GM18951 (cell line): ENCODE measurements at regions of chr3 and their contacts with region 1.

Region 1: DNA sequence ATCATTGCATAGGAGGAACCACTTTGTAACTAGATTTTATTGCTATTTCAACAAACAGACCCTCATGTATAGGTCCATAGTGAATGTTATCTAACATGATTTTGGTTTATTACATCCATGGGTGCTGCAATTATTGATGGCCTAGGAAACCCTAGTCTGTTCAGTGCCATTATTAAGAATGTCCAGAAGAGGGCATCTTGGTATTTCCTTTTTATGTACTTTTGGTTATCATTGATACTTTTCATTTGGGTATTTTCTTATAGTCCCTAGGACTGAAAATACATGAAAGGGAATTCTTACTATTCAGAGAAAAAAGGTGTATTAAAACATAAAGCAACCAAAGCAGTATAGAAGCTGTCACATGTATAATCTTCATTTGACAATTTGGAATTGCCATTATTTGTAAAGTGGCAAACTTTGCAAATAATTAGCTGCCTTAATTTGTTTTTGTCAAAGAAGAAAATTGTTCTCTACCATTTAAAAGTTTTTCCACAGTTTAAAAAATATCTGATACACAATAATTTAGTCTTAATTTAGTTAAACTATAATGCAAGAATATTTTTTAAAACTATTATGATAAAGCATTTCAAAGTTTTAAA is 48.7 kb downstream of the CNOT10 start:
- POLR2A ChIP-seq: no peak

Region 2: DNA sequence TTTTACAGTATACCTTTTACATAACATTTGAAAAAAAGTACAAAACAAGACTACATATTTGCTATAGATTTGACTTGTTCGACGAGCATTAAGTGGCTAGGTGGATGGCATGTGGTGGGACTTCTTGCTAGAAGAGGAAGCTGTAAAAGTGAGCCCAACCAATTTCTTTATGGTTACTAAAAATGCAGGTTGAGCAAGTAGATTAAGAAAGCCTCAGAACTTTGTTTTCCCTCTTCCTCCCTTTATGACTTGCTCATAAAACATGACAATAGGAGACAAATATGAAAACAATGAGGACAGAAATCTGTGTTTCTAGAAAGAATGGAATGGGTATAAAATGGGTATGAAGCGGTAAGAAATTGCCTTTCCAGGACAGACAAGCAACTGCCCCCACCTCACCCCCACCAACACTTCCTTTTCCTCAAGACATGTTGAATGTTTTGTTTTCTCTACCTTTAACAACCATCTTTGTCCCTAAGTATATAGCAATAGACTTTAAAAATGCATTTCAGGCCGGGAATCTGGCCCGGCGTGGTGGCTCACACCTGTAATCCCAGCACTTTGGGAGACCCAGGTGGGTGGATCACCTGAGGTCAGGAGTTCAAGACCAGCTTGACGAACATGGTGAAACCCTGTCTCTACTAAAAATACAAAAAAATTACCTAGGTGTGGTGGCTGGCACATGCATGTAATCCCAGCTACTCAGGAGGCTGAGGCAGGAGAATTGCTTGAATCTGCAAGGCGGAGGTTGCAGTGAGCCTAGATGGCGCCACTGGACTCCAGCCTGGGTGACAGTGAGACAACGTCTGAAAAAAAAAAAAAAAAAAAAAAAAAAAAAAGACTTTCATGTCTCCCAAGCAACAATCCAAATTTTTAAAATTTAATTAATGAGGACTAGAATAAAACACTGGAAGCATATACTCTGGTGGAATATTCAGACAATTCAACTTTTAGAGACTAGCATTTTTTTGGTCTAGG is 168.0 kb after region 1 on chr3:
- in situ Hi-C with region 1: loop called (anchors 10 kb)
- POLR2A ChIP-seq: no peak

Region 3: GRCh38 chr3:32934150-32934742 is 200.5 kb after region 1 on chr3:
- in situ Hi-C with region 1: loop called (anchors 10 kb)
- POLR2A ChIP-seq: no peak

Region 4: GRCh38 chr3:33074217-33075067 is 340.7 kb after region 1 on chr3:
- in situ Hi-C with region 1: loop called (anchors 25 kb)
- POLR2A ChIP-seq: no peak